ENCODE measurements at regions of chr16 and their contacts with region 1.

Region 1: DNA sequence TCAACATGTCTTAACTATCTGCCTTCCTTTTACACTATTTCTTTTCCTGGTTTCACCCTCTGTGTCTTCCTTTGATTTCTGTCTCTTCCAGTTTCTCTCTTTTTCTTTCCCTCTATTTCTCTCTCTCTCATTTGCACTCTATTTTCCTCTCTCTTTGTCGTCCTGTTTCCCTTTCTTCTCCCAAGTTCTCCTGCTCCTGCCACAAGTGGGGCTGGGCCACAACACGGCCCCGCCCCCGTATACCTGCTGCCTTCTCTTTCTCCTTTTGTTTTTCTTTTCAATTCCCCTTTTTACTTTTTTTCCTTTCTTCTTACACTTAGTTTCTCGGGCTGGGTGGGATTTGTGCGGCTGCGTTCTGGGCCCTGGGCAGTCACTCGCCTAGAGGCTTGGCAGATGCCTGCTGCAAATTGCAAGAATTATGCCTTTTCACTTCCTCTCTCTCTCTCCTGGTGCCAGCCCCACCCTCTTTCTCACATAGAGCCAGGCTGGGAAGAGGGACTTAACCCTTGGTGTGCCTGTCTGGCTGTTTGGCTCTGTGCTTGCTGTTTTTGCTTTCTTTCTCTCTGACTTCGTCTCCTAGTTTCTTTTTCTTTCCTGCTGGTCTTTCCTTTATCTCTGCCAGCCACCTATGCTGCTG is 2139.4 kb downstream of the TP53TG3F start:
- DNase-seq: no peak
- H3K4me3 ChIP-seq: peak overlapping the region; percentile 25 to 47 (median 46)
- H3K27ac ChIP-seq: peak overlapping the region; percentile 95
- H3K4me1 ChIP-seq: peaks cover 4% of the 10 kb centered on the region
- H3K27me3 ChIP-seq: no peaks in the 10 kb centered on the region
- CTCF ChIP-seq: no peak

Region 2: GRCh38 chr16:35565626-35566025 is 33.2 kb before region 1 on chr16:
- CTCF ChIA-PET with region 1: no interaction called
- dilution Hi-C with region 1: no loop called
- in situ Hi-C with region 1: no loop called
- intact Hi-C with region 1: loop called (anchors 1 kb)
- DNase-seq: no peak
- H3K4me3 ChIP-seq: no peak overlapping the region
- H3K27ac ChIP-seq: no peak overlapping the region
- H3K4me1 ChIP-seq: no peaks in the 10 kb centered on the region
- H3K27me3 ChIP-seq: no peaks in the 10 kb centered on the region
- CTCF ChIP-seq: no peak

Region 3: GRCh38 chr16:35639233-35640205 is 40.7 kb after region 1 on chr16:
- CTCF ChIA-PET with region 1: no interaction called
- dilution Hi-C with region 1: no loop called
- in situ Hi-C with region 1: no loop called
- intact Hi-C with region 1: loop called (anchors 5 kb)
- DNase-seq: no peak
- H3K4me3 ChIP-seq: no peak overlapping the region
- H3K27ac ChIP-seq: no peak overlapping the region
- H3K4me1 ChIP-seq: no peaks in the 10 kb centered on the region
- H3K27me3 ChIP-seq: no peaks in the 10 kb centered on the region
- CTCF ChIP-seq: no peak

Region 4: DNA sequence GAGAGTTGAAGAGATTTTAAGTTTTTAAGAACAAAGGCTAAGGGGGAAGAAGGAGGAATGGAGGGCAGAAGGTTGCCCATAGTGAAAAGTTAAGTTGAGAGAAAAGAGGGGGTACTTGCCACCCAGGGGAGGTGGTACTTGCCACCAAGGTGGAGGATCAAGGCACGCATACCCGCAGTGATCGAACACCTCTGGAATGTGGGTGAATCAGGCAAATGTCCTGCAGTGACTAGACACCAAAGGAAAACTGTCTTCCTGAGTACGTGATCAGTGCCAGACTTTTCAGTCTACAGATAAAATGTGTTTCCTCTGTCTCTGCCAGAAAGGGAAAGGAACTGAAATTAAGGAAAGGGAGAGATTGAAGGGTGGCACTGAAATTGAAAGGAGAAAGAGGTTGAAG is 145.9 kb after region 1 on chr16:
- CTCF ChIA-PET with region 1: no interaction called
- dilution Hi-C with region 1: no loop called
- in situ Hi-C with region 1: no loop called
- intact Hi-C with region 1: loop called (anchors 10 kb)
- DNase-seq: no peak
- H3K4me3 ChIP-seq: no peak overlapping the region
- H3K27ac ChIP-seq: no peak overlapping the region
- H3K4me1 ChIP-seq: no peaks in the 10 kb centered on the region
- H3K27me3 ChIP-seq: no peaks in the 10 kb centered on the region
- CTCF ChIP-seq: no peak